Naive thymus-derived CD4-positive, alpha-beta T cell (primary cell): ENCODE measurements at regions of chr2 and their contacts with region 1.

Region 1: DNA sequence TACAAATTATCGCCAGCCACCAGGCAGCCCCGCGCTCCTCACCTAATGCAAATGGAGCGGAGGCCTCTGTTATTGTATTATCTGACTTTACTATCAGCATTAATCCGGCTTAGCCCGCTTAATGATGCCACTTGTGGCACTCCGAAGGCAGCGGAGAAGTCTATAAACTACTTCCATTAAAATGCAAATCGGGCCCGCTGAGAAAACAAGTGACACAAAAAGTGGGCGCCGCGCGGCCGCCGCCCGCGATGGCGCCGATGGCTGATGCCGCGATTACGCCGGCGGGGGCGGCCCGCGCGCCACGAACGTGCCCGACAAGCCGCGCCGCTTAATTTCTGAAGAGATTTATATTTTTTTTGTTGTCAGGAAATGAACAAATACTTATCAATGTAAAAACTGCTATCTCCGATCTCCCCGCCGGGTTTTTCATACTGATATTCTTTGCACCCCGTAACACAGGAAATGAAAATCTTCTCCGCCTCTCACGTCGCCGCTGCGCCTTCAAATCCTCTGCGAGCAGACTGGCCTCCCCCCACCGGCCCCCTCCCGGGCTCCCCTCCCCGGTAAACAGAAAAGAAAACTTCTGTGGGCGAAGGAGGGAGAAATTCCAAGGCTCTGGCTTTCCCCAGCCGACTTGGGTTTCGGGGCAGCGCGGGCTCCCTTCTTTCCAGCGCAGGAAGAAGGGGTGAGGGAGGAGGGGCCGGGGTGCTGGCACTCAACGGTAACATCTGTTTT is 221.8 kb downstream of the INSIG2 start:
- DNase-seq: peak; percentile 51 to 82 (median 75)
- ATAC-seq: peak; percentile 81
- H3K4me3 ChIP-seq: peak overlapping the region; percentile 89
- H3K4me3 Mint-ChIP-seq: peak overlapping the region; percentile 81 to 95 (median 90)
- H3K27ac ChIP-seq: peak overlapping the region; percentile 89
- H3K27ac Mint-ChIP-seq: peak overlapping the region; percentile 87 to 99 (median 96)
- H3K4me1 ChIP-seq: peaks cover 10 to 12% of the 10 kb centered on the region in 2 donors
- H3K4me1 Mint-ChIP-seq: peaks cover 0 to 21% (median 9%) of the 10 kb centered on the region in 7 donors
- H3K27me3 ChIP-seq: no peaks in the 10 kb centered on the region
- H3K27me3 Mint-ChIP-seq: peaks cover 0 to 21% (median 0%) of the 10 kb centered on the region in 5 donors

Region 2: DNA sequence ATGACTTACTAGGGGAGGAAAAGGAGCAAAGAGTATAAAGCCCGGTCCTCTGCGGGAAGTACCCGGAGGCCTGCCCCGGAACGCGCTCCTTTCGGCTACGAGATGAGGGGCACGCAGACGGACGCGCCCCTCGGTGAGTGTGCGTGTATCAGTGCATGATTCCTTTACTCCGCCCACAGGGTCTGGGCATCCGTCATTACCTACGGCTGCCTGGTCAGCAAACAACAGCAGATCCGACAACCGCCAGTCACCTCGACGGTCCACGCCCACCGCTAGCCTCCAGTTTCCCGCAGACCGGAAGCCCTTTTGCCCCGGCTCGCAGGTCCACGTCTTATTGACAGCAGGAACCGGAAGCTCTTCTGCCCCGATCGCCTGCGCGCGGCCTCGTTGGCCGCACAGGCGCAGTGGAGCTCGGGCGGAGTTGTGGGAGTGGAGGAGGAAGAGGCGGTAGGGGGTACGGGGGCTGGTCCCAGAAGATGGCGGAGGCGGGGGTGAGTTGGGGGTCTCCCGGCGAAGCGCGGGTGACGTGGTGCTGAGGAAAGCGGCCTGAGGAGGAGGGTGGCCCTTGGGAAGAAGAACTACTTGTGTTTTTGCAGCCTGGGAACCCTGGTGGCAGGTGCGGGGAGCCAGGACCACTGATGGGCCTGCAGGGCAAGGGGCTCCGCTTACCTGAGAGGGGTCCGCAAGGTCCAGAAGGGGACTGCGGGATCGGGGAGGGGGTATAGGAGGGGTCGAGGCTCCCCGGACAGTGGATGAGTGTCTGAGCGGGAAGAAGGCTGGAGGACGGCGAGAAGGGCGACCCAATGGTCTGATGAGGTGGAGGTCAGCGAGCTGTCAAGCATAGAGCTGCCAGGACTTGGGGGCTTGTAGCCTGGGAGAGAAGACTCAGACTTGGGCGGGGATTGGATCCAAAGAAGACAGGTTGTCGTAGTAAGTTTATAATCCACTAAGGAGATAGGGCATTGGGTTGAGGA is 221.8 kb before region 1 on chr2 and contains the start of gene INSIG2:
- CTCF ChIA-PET with region 1: no interaction called
- POLR2A ChIA-PET with region 1: no interaction called
- intact Hi-C with region 1: loop called in 1 of 2 experiments (anchors 2 kb)
- DNase-seq: peak; percentile 77 to 92 (median 81)
- ATAC-seq: peak; percentile 93
- H3K4me3 ChIP-seq: peak within 1 kb of the TSS; percentile 92
- H3K4me3 Mint-ChIP-seq: peak within 1 kb of the TSS; percentile 63 to 96 (median 92)
- H3K27ac ChIP-seq: peak within 1 kb of the TSS; percentile 87
- H3K27ac Mint-ChIP-seq: peak within 1 kb of the TSS; percentile 70 to 97 (median 91)
- H3K4me1 ChIP-seq: peaks cover 0 to 7% of the 10 kb centered on the region in 2 donors
- H3K4me1 Mint-ChIP-seq: peaks cover 6 to 37% (median 24%) of the 10 kb centered on the region in 7 donors
- H3K27me3 ChIP-seq: no peaks in the 10 kb centered on the region
- H3K27me3 Mint-ChIP-seq: peaks cover 0 to 12% (median 0%) of the 10 kb centered on the region in 5 donors
- total RNA-seq, gene INSIG2: 8.5 to 31.5 (median 20.3) TPM

Region 3: DNA sequence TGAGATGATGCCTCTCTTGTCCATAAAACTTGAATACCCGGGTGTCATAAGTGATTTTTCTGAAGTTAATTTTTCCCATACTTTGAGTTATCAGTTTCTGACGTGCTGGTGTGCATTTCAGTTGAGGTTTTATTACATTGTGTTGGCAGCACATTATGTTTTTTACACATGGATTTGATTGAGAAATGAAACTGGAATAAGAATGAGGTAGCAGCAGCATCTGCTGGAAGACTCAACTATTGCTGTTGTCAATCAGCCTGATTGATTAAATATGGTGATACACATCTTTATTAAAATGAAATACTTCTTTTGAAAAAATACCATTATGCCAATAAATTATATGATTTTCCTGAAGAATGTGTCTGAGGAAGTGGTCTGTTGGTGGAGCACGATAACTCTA is 161.3 kb before region 1 on chr2:
- CTCF ChIA-PET with region 1: no interaction called
- POLR2A ChIA-PET with region 1: no interaction called
- intact Hi-C with region 1: no loop called
- DNase-seq: no peak
- ATAC-seq: no peak
- H3K4me3 ChIP-seq: no peak overlapping the region
- H3K4me3 Mint-ChIP-seq: no peak overlapping the region
- H3K27ac ChIP-seq: no peak overlapping the region
- H3K27ac Mint-ChIP-seq: no peak overlapping the region
- H3K4me1 ChIP-seq: no peaks in the 10 kb centered on the region
- H3K4me1 Mint-ChIP-seq: peaks cover 0 to 4% (median 0%) of the 10 kb centered on the region in 7 donors
- H3K27me3 ChIP-seq: no peaks in the 10 kb centered on the region
- H3K27me3 Mint-ChIP-seq: peaks cover 2 to 33% (median 19%) of the 10 kb centered on the region in 5 donors

Region 4: DNA sequence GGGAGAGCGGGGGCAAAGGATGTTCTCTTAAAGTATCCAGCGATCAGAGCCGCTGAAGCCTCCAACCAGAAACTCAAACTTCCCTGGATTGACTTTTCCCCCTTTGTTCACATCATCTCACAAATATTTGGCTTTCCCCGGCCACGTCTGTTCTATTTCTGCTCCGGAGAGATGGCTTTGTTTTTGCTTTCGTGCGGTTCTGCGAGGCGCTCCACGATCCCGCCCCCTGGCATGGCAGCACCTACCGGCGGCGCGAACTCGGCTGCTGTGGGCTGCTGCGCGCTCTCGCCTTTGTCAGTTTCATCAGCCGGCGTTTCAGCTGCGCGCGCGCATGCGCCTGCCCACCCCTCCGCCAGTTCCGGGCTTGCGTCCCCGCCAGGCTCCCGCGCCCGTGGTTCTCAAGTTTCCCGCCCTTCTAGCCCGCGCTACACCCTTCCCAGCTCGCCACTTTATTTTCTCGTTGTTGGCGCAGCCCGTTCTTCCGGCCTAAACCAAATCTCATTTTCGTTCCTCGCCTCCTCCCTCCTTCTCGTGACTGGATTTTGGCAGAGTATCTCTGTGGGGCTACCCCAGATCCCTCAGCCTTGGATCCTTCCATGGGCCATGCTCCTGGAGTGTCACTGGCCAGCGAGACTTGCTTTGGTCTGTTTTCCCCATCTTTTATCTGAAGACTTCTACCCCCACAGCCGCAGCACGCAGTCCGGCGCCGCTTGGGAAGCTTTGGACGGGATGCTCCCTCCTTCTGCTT is 123.8 kb before region 1 on chr2:
- CTCF ChIA-PET with region 1: no interaction called
- POLR2A ChIA-PET with region 1: interaction called, 5 read pairs
- intact Hi-C with region 1: loop called (anchors 1 to 5 kb)
- DNase-seq: peak; percentile 77 to 91 (median 86)
- ATAC-seq: peak; percentile 97
- H3K4me3 ChIP-seq: peak overlapping the region; percentile 81
- H3K4me3 Mint-ChIP-seq: peak overlapping the region; percentile 89 to 98 (median 94)
- H3K27ac ChIP-seq: peak overlapping the region; percentile 74
- H3K27ac Mint-ChIP-seq: peak overlapping the region; percentile 88 to 98 (median 90)
- H3K4me1 ChIP-seq: peaks cover 6 to 9% of the 10 kb centered on the region in 2 donors
- H3K4me1 Mint-ChIP-seq: peaks cover 7 to 25% (median 21%) of the 10 kb centered on the region in 7 donors
- H3K27me3 ChIP-seq: no peaks in the 10 kb centered on the region
- H3K27me3 Mint-ChIP-seq: peaks cover 0 to 2% (median 0%) of the 10 kb centered on the region in 5 donors